Heart left ventricle (tissue), 16 donors: ENCODE measurements at regions of chr2 and their contacts with region 1.

Region 1: GRCh38 chr2:38264396-38265281 is 112.4 kb downstream of the ATL2 start:
- DNase-seq: no peak
- ATAC-seq: no peak
- H3K4me3 ChIP-seq: no peak overlapping the region
- H3K27ac ChIP-seq: peak overlapping the region in 6 of 12 donors; percentile 47 to 84 (median 56)
- H3K4me1 ChIP-seq: peaks cover 0 to 32% (median 0%) of the 10 kb centered on the region in 12 donors
- H3K27me3 ChIP-seq: no peaks in the 10 kb centered on the region
- CTCF ChIP-seq: no peak
- POLR2A ChIP-seq: no peak

Region 2: GRCh38 chr2:38128653-38129052 is 136.0 kb before region 1 on chr2:
- intact Hi-C with region 1: loop called in 1 of 10 experiments (anchors 10 kb)
- DNase-seq: peak in 3 of 5 donors; percentile 53 to 65 (median 61)
- ATAC-seq: peak; percentile 59 to 90 (median 82)
- H3K4me3 ChIP-seq: no peak overlapping the region
- H3K27ac ChIP-seq: peak overlapping the region in 11 of 12 donors; percentile 6 to 90 (median 57)
- H3K4me1 ChIP-seq: peaks cover 0 to 56% (median 0%) of the 10 kb centered on the region in 12 donors
- H3K27me3 ChIP-seq: no peaks in the 10 kb centered on the region
- CTCF ChIP-seq: no peak
- POLR2A ChIP-seq: no peak

Region 3: GRCh38 chr2:38159597-38159996 is 105.0 kb before region 1 on chr2:
- intact Hi-C with region 1: loop called in 1 of 10 experiments (anchors 10 kb)
- DNase-seq: peak in 1 of 5 donors; percentile 27
- ATAC-seq: peak; percentile 61 to 83 (median 73)
- H3K4me3 ChIP-seq: no peak overlapping the region
- H3K27ac ChIP-seq: peak overlapping the region in 11 of 12 donors; percentile 17 to 88 (median 51)
- H3K4me1 ChIP-seq: peaks cover 0 to 40% (median 2%) of the 10 kb centered on the region in 12 donors
- H3K27me3 ChIP-seq: no peaks in the 10 kb centered on the region
- CTCF ChIP-seq: no peak
- POLR2A ChIP-seq: no peak